PC-3 (cell line): ENCODE measurements at regions of chr10 and their contacts with region 1.

Region 1: DNA sequence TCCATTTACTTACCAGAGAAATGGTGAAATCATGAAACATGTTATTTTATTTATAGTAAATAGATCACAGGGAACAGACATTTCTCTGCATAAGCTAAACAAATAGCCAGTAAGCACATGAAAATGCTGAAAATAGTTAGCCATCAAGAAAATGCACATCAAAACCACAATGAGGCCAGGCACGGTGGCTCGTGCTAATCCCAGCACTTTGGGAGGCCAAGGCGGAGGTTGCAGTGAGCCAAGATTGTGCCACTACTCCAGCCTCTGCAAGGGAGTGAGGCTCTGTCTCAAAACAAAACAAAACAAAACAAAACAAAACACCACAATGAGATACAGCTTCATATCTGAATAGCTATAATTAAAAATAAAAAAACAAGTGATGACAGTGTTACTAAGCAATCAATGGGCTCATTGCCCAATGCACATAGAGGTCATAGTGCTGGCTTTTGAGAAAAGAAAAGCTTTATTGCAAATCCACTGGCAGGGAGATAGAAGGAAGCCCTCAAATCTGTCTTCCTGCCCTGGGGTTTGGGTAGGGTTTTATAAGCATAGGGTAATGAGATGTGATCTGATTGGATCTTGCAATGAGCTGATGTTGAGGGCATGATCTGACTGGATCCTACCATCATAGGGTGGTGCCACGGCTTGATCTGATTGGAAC is 16.2 kb downstream of the CSTF2T start:
- DNase-seq: peak; percentile 84
- ATAC-seq: peak; percentile 65
- H3K4me3 ChIP-seq: no peak overlapping the region
- H3K27ac ChIP-seq: peak overlapping the region; percentile 55
- H3K4me1 ChIP-seq: peaks cover 36% of the 10 kb centered on the region
- H3K27me3 ChIP-seq: no peaks in the 10 kb centered on the region
- CTCF ChIP-seq: no peak

Region 2: DNA sequence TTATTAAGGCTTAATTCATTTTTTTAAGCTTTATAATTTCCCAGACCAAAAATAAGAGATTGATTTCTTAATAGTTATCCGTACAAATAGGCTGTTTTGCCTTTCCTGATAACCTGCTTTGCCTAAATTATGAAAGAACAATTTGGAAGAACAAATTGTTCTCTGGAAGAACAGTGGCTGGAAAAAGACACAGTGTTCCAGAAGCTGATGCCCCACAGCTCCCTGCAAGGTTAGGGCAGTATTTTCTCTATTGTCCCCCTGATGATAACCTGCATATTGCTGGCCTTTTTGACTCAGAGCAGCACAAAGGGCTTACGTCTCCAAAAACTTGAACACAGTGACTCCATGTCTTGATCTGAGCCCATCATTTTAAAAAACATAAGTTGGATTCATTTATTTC is 135.2 kb before region 1 on chr10:
- CTCF ChIA-PET with region 1: no interaction called
- POLR2A ChIA-PET with region 1: no interaction called
- intact Hi-C with region 1: loop called (anchors 5 kb)
- DNase-seq: no peak
- ATAC-seq: no peak
- H3K4me3 ChIP-seq: no peak overlapping the region
- H3K27ac ChIP-seq: no peak overlapping the region
- H3K4me1 ChIP-seq: peaks cover 8% of the 10 kb centered on the region
- H3K27me3 ChIP-seq: no peaks in the 10 kb centered on the region
- CTCF ChIP-seq: no peak

Region 3: GRCh38 chr10:51860257-51860656 is 177.1 kb after region 1 on chr10:
- CTCF ChIA-PET with region 1: no interaction called
- POLR2A ChIA-PET with region 1: no interaction called
- intact Hi-C with region 1: no loop called
- DNase-seq: peak; percentile 52
- ATAC-seq: peak; percentile 43; the same call in 1 of the 2 replicates
- H3K4me3 ChIP-seq: no peak overlapping the region
- H3K27ac ChIP-seq: no peak overlapping the region
- H3K4me1 ChIP-seq: no peaks in the 10 kb centered on the region
- H3K27me3 ChIP-seq: no peaks in the 10 kb centered on the region
- CTCF ChIP-seq: no peak